ENCODE measurements at regions of chr17 and their contacts with region 1.

Region 1: DNA sequence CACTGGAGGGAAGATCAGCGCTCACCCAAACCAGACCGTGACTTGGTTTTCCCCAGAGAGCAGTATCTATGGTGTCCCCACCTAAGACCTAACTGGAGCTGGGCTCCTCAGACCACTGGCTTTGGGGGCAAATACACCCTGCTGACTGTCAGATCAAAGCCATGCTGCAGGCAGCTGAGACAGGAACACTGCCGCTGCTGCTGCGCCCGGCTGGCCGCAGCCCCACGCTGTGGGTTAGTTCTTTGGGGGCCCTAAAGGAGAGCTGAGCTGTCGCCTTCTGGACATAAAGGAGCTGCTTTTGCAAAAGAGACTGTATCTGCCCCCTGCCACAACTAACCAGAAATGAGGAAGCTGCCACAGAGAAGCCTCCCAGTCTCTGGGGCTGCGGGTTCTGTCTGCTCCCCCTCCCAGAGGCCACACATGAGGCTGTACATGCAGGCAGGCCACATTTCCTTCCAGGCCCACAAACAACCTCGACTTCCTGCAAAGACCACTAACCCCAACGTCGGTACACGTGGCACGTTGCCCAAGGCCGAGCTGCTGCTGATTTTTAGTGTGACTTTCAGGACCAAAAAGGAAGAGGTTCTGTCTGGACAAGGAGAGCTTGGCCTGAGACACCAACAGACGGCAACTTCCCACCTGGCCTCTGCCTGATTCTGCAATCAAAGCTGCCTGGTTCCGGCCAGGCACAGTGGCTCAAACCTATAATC is 18.2 kb upstream of the ABR start:
- DNase-seq: peak; percentile 96
- H3K4me3 ChIP-seq: peak overlapping the region; percentile 51
- H3K27ac ChIP-seq: peak overlapping the region; percentile 98
- H3K4me1 ChIP-seq: peaks cover 84% of the 10 kb centered on the region
- CTCF ChIP-seq: no peak

Region 2: GRCh38 chr17:979538-980405 is 218.2 kb before region 1 on chr17 and contains the start of gene NXN:
- CTCF ChIA-PET with region 1: no interaction called
- POLR2A ChIA-PET with region 1: no interaction called
- intact Hi-C with region 1: no loop called
- DNase-seq: peak; percentile 81
- H3K4me3 ChIP-seq: peak within 1 kb of the TSS; percentile 68
- H3K27ac ChIP-seq: peak within 1 kb of the TSS; percentile 67
- H3K4me1 ChIP-seq: peaks cover 17% of the 10 kb centered on the region
- CTCF ChIP-seq: peak; percentile 28; the same call in 1 of the 2 replicates
- total RNA-seq, gene NXN: 0.93 and 1.3 TPM in 2 replicates

Region 3: DNA sequence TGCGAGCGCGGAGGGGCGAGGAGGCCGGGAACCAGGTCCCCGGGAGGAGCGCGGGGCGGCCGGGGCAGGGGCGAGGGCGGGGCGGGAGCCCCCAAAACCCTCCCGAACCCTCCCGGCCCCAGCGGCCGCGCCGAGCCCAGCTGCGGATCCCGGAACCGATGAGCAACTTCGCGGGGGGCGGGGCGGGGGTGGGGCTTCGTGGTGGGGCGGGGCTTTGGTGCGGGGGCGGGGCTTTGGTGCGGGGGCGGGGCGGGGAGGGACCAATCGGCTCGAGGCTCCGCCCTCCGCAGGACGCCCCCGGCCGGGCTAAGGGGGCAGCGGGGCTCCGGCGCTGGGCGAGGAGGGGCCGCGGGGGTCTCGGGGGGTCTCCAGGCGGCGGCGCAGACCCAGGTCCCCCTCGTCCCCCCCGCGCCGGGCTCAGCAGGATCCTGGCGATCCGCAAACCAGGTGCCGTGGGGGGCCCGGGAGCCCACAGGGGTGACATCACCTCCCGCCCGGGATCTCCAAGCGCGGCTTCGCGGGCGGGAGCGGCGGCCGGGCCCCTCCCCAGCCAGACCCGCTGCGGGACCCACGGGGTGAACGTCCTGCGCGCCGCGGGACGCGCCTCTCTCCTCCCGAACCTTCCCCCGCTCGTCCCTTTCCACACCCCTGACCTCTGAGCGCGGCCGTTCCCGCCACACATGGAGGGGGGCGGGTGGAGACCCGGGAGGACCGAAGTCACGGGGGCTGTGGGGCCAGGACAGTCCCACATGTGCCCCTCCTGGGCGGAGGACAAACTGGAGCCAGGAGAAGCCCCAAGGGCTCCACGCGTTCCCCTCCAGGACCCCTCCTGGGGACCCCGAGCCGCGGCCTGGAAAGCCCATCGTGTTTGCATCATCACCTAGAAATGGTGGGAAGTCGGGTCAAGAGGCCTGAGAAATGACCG is 17.9 kb before region 1 on chr17 and contains the start of gene ABR:
- CTCF ChIA-PET with region 1: interaction called, 3 read pairs
- POLR2A ChIA-PET with region 1: interaction called, 13 read pairs
- intact Hi-C with region 1: loop called (anchors 1 kb)
- DNase-seq: peak; percentile 62
- H3K4me3 ChIP-seq: peak within 1 kb of the TSS; percentile 74
- H3K27ac ChIP-seq: peak within 1 kb of the TSS; percentile 90
- H3K4me1 ChIP-seq: peaks cover 55% of the 10 kb centered on the region
- CTCF ChIP-seq: no peak
- total RNA-seq, gene ABR: 153 and 164 TPM in 2 replicates

Region 4: DNA sequence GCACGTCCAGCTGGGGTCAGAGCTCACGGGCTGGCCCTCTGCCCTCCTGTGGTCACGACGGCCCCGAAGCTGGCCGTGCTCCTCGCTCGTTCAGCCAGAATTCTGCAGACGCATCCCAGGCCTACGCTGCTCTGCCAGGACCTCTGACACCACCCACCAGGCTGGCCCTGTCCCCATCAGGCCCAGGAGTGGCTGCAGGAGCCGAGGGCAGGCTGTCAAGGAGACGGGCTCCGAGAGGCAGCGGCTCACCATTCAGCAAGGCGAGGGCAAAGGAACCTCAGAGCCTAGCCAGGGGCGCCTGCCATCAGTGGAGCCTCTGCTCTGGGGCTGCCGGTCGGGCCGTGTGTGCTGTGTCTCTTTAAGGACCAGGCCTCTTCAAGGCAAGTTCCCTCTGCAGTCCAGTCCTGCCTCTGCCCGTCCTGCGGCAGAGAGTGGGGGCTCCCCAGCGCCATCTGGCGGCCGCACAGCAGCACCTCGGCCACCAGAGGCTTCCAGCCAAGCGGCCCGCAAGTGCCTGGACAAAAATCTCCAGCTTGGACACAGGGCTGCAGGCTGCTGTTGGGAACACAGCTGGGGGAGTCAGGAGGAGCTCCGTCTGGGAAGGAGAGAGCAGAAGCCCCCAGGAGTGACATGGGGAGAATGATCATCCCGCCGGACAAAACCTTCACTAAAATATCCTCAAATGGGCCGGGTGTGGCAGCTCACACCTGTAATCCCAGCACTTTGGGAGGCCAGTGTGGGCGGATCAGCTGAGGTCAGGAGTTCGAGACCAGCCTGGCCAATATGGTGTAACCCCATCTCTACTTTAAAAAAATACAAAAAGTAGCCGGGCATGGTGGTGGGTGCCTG is 10.8 kb before region 1 on chr17:
- CTCF ChIA-PET with region 1: interaction called, 5 read pairs
- POLR2A ChIA-PET with region 1: interaction called, 20 read pairs
- intact Hi-C with region 1: no loop called
- DNase-seq: peak; percentile 80
- H3K4me3 ChIP-seq: no peak overlapping the region
- H3K27ac ChIP-seq: no peak overlapping the region
- H3K4me1 ChIP-seq: peaks cover 71% of the 10 kb centered on the region
- CTCF ChIP-seq: peak; percentile 93

Region 5: DNA sequence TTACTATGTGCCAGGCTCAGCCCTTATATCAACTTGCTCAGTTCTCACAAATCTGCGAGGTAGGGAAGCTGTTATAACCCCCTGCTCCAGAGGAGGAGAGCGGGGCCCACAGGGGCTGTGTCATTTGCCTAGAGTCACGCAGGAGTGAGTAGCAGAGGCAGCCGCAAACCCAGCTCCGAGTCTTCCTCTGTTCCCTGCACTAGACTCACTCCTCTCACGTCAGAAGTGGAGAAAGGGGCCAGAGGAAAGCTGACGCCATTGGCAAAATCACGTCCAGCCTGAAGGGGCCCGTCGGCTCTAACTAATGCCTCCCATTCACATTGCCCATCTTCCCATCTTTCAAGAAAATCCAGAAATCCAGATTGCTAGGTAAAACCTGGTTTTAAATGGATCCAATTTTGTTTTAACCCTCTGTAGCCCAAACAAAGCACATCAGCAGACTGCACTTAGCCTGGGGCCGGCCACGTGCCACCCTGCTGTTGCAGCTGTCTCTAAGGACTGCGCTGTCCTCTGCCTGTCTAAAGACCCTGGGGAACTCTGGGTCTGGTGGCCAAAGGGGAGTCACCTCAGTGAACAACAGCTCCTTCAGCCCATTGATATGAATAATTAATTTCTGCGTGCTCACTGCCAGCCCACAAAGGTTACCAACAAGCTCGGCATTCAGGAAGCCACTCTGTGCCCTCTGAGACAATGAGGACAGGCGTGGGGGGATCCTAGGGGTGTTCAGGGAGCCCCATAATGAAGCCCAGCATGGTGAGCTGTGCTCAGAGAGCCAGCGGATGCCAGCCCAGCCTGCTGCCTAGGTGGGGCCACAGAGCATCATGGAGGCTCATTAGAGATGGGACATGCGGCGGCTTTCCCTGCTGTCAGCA is 18.5 kb after region 1 on chr17:
- CTCF ChIA-PET with region 1: interaction called, 6 read pairs
- POLR2A ChIA-PET with region 1: interaction called, 54 read pairs
- intact Hi-C with region 1: loop called (anchors 1 kb)
- DNase-seq: peak; percentile 92
- H3K4me3 ChIP-seq: peak overlapping the region; percentile 54
- H3K27ac ChIP-seq: peak overlapping the region; percentile 96
- H3K4me1 ChIP-seq: peaks cover 96% of the 10 kb centered on the region
- CTCF ChIP-seq: no peak

Region 6: DNA sequence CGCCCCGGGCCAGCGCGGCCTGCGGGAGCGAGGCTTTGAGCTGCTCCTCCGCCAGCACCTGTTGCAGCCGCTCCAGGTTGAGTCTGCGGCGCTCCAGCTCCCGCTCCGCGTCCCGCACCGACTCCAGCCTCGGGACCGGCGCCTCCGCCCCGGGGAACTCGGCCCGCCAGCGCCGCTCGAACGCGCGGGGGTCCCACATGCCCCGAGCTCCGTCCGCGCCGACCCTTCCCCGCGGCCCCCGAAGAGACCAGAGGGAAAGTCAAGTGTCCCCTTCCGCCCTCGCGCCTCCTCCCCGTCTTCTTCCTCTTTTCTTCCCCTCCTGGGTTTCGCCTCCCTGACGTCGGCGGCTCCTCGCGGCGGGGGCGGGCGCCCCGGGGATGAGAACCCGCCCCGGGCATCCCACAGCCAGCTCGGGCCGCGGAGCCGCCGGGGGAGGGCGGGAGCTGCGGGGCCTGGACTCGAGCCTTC is 31.5 kb after region 1 on chr17:
- CTCF ChIA-PET with region 1: interaction called, 7 read pairs
- POLR2A ChIA-PET with region 1: interaction called, 57 read pairs
- intact Hi-C with region 1: loop called (anchors 1 kb)
- DNase-seq: peak; percentile 85
- H3K4me3 ChIP-seq: peak overlapping the region; percentile 88
- H3K27ac ChIP-seq: peak overlapping the region; percentile 86
- H3K4me1 ChIP-seq: peaks cover 32% of the 10 kb centered on the region
- CTCF ChIP-seq: no peak

Region 7: DNA sequence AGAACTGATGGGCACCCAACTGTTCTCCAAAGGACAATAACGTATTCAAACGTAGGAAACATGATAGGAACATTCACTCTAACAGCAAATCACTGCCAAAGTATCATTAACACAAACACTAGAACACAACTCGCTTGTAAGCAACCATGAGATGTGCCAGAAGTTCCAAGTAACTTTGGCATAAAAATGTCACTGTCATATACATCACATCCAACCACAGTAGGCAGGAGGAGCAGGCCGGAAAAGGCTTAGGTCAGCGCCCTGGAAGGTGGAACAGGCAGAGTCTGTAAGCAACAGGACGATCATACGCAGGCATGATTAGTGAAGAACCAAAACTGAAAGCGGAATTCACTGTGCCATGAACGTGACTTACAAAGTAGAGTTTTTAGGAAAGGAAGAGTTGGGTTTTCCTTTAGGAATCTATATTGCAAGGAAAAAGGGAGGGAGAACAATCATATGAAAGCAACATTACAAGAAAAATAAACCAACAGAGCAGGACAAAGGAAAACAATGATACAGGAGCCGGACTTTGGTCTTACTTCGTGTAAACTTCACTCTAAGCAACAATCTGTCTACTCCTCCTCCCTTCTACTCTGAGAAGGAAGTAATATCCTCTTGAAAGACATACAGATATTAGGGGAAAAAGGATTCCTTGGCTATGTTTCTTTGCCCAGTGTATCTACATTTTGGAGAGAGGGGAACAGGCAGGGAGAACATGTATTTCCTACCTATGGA is 149.8 kb after region 1 on chr17:
- CTCF ChIA-PET with region 1: no interaction called
- POLR2A ChIA-PET with region 1: no interaction called
- intact Hi-C with region 1: no loop called
- DNase-seq: no peak
- H3K4me3 ChIP-seq: no peak overlapping the region
- H3K27ac ChIP-seq: no peak overlapping the region
- H3K4me1 ChIP-seq: no peaks in the 10 kb centered on the region
- CTCF ChIP-seq: no peak

Measured in OCI-LY7 (cell line).